ENCODE measurements at regions of chr2 and their contacts with region 1.

Region 1: GRCh38 chr2:65031341-65032018 is 24.7 kb upstream of the CEP68 start:
- DNase-seq: no peak
- ATAC-seq: peak; percentile 8
- H3K4me3 Mint-ChIP-seq: peak overlapping the region; percentile 80
- H3K27ac Mint-ChIP-seq: peak overlapping the region; percentile 86
- H3K4me1 Mint-ChIP-seq: peaks cover 66% of the 10 kb centered on the region
- H3K27me3 Mint-ChIP-seq: no peaks in the 10 kb centered on the region
- CTCF ChIP-seq: no peak

Region 2: DNA sequence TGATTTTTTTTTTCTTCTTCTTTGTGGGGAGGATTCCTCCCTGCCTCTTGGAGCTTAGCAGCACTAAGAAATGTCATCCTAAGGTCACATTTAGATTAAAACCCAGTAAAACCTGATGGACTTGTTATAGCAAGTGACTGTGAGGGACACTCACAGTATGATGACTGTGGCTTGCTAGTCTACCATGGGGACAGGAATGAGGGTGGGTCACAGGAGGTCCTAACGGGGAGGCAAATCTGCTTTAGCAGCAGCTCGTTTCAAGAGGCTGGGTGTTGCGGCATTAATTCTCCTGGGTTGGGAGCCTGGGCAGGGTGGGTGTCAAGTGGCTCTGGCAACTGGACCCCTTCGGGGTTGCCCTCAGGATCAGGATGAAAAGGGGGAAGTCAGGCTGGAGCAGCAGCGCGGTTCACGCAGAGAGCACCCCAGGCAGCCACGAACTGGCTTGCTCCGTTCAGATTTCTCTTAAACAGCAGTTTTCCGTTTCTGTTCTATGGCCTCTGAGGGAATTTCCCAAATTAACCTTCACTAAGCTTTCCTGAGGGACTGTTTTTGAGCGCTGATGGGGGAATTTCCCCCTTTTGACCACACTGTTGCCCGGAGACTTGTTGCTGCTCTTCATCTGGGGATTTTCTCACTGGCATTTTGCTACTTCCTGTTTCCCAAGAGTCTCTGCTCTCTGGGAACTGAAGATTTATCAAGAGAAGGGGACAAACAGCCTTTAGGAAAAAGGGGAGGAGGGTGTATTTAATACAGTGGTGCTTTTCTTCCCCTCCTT is 827.4 kb before region 1 on chr2:
- CTCF ChIA-PET with region 1: no interaction called
- POLR2A ChIA-PET with region 1: interaction called, 21 read pairs
- intact Hi-C with region 1: no loop called
- DNase-seq: peak; percentile 42
- ATAC-seq: peak; percentile 79
- H3K4me3 Mint-ChIP-seq: peak overlapping the region; percentile 83
- H3K27ac Mint-ChIP-seq: peak overlapping the region; percentile 93
- H3K4me1 Mint-ChIP-seq: peaks cover 72% of the 10 kb centered on the region
- H3K27me3 Mint-ChIP-seq: no peaks in the 10 kb centered on the region
- CTCF ChIP-seq: no peak

Region 3: GRCh38 chr2:64873472-64873924 is 158.0 kb before region 1 on chr2:
- CTCF ChIA-PET with region 1: interaction called, 3 read pairs
- POLR2A ChIA-PET with region 1: interaction called, 6 read pairs
- intact Hi-C with region 1: loop called (anchors 1 kb)
- DNase-seq: peak; percentile 86
- ATAC-seq: peak; percentile 99
- H3K4me3 Mint-ChIP-seq: peak overlapping the region; percentile 52
- H3K27ac Mint-ChIP-seq: no peak overlapping the region
- H3K4me1 Mint-ChIP-seq: peaks cover 8% of the 10 kb centered on the region
- H3K27me3 Mint-ChIP-seq: no peaks in the 10 kb centered on the region
- CTCF ChIP-seq: peak; percentile 90

Region 4: DNA sequence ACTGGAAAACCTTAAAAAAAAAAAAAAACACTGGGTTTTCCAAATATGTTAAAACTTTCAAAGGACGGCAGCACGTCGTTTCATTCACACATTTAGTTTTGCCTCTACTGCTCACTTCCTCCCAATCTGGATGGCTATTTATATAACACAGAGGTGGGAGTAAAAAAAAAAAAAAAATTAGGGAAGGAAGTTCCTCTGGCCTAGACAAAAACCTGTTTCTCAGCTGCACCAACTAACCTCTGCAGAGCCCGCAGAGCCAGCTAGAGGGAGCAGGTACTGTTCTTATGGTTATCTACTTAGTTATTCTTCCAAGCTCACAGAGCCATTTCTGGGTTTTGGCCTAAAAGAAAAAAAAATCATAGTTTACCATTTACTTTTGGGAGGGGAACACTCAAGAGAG is 14.1 kb before region 1 on chr2:
- CTCF ChIA-PET with region 1: interaction called, 40 read pairs
- POLR2A ChIA-PET with region 1: interaction called, 39 read pairs
- intact Hi-C with region 1: loop called (anchors 1 kb)
- DNase-seq: no peak
- ATAC-seq: peak; percentile 78
- H3K4me3 Mint-ChIP-seq: peak overlapping the region; percentile 55
- H3K27ac Mint-ChIP-seq: peak overlapping the region; percentile 71
- H3K4me1 Mint-ChIP-seq: peaks cover 44% of the 10 kb centered on the region
- H3K27me3 Mint-ChIP-seq: no peaks in the 10 kb centered on the region
- CTCF ChIP-seq: no peak

Region 5: GRCh38 chr2:65056215-65057053 is 25.0 kb after region 1 on chr2 and contains the start of gene CEP68:
- CTCF ChIA-PET with region 1: interaction called, 3 read pairs
- POLR2A ChIA-PET with region 1: interaction called, 25 read pairs
- intact Hi-C with region 1: loop called (anchors 1 kb)
- DNase-seq: peak; percentile 95
- ATAC-seq: peak; percentile 91
- H3K4me3 Mint-ChIP-seq: peak within 1 kb of the TSS; percentile 97
- H3K27ac Mint-ChIP-seq: peak within 1 kb of the TSS; percentile 95
- H3K4me1 Mint-ChIP-seq: peaks cover 75% of the 10 kb centered on the region
- H3K27me3 Mint-ChIP-seq: no peaks in the 10 kb centered on the region
- CTCF ChIP-seq: no peak
- total RNA-seq, gene CEP68: 16.6 and 17.9 TPM in 2 replicates

Region 6: DNA sequence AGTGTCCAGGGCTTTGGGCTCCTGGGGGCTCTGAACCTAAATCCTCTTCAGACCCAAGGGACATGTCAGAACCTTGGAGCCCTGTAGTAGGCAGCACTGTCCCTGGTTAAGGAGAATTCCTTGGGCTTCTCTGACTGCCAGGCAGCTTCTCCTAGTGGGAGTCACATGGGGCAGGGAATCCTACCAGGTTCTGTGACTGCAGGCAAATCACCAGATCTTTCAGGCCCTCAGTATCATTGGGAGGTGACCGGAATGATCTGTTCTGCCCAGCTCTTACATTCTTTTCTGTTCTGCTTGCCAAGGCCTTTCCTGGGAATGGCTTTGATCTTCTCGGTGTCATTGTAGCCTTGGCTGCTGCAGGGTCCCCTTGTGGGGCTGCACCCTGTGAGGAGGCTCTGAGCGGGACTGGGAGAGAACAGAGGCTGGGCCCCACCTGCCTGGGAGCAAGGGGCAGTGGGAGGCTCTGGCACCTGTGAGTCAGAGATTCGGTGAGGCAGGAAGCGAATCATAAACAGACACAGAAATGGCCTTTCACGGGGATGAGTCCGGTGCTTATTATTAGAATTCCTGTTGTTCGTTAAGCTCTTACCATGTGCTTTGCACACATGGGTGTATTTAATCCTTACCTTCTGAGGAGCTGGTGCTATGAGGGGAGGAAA is 38.8 kb after region 1 on chr2:
- CTCF ChIA-PET with region 1: no interaction called
- POLR2A ChIA-PET with region 1: no interaction called
- intact Hi-C with region 1: no loop called
- DNase-seq: no peak
- ATAC-seq: no peak
- H3K4me3 Mint-ChIP-seq: no peak overlapping the region
- H3K27ac Mint-ChIP-seq: peak overlapping the region; percentile 21
- H3K4me1 Mint-ChIP-seq: peaks cover 35% of the 10 kb centered on the region
- H3K27me3 Mint-ChIP-seq: no peaks in the 10 kb centered on the region
- CTCF ChIP-seq: no peak

Region 7: DNA sequence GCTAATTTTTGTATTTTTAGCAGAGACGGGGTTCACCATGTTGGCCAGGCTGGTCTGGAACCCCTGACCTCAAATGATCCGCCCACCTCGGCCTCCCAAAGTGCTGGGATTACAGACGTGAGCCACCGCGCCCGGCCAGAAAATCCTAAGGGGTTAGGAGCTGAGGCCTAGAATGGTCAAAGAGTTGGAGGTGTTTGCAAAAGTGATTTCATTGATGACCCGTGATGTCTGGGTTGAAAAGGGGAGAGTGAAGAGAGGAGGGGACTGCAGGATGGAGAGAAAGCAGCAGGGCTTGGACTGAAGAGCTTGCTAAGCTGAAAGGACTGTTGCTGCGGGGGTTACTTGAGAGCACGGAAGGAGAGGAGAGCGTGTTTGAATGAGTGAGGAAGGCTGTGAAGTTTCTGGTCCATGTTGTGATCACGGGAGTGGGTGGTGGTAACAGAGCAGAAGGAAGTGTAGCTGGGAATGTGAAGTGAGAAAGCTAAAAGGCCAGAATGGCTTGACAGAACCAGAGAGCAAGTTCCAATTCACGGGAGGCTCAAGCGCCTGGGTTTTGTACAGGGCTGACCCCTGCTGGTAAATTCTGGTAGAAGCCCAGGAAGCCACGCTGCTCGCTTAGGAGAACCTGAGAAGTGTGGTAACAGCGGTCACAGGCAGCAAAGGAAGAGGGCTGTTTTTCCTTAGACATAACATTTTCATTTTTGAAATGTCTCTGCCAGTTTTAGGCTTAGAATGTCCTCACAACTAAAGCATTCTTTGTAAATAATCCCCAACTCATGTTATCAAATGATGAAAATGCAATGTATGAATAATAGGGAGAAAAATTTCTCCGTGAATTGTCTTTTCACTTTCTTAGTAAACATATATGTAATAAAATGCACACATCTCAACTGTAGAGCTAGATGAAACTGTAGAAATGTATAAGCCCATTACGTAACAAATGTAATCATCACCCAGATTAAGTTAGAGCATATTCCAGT is 155.7 kb after region 1 on chr2:
- CTCF ChIA-PET with region 1: no interaction called
- POLR2A ChIA-PET with region 1: no interaction called
- intact Hi-C with region 1: no loop called
- DNase-seq: peak; percentile 38
- ATAC-seq: peak; percentile 91
- H3K4me3 Mint-ChIP-seq: no peak overlapping the region
- H3K27ac Mint-ChIP-seq: no peak overlapping the region
- H3K4me1 Mint-ChIP-seq: peaks cover 4% of the 10 kb centered on the region
- H3K27me3 Mint-ChIP-seq: peaks cover 11% of the 10 kb centered on the region
- CTCF ChIP-seq: no peak

Measured in activated B cell treated with CpG ODN at 0.5 μM for 24 hours (primary cell).